ENCODE measurements at regions of chr14 and their contacts with region 1.

Region 1: DNA sequence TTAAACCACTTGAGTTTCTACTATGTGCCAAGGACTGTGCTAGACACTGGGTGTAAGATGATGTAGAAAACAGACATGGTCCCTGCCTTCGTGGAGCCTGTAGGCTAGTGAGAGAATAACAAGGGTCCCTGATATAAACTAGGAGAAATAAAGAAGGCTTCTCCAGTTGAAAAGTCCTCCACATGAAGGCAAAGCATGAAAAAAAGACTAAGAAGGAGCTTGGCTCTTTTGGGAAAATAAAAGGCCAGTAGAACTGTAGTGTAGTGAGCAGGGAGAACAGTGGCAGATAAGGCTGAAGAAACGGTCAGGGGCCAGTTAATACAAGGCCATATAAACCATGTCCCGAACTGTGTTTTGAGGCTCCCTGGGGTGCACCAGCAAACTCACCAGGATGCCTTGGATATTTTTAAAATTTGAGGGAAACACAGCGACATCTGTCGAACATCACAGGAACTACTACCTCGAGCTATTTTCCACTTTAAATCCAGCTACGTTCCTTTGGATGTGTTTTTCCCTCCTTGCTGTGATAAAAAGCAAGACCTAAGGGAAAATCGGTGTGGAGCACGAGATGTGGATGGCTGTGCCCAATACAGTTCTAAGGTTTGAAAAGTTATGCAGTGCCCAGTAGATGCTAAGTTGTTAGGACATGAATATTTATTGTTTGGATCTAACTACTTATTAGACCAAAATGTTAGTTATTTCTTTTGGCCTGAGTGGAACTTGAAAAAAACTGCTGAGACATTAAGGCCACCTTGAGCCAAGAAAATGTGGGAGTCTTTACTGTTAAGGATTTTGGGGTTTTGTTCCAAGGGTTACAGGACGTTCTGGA is 8.5 kb upstream of the CFL2 start:
- DNase-seq: peak; percentile 24
- ATAC-seq: peak; percentile 53
- H3K4me3 Mint-ChIP-seq: no peak overlapping the region
- H3K27ac Mint-ChIP-seq: peak overlapping the region; percentile 85
- H3K4me1 Mint-ChIP-seq: peaks cover 7% of the 10 kb centered on the region
- H3K27me3 Mint-ChIP-seq: peaks cover 6% of the 10 kb centered on the region; the same call in 1 of the 2 replicates
- CTCF ChIP-seq: peak; percentile 74

Region 2: DNA sequence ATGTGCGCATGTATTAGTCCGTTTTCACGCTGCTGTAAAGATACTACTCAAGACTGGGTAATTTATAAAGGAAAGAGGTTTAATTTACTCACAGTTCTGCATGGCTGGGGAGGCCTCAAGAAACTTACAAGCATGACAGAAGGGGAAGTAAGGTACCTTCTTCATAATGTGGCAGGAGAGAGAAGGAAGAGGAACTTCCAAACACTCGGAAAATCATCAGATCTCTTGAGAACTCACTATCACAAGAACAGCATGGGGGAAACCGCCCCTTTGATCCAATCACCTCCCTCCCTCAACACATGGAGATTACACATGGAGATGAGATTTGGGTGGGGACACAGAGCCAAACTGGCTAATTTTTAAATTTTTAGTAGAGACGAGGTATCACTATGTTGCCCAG is 51.2 kb before region 1 on chr14:
- CTCF ChIA-PET with region 1: interaction called, 47 read pairs
- POLR2A ChIA-PET with region 1: no interaction called
- DNase-seq: no peak
- ATAC-seq: no peak
- H3K4me3 Mint-ChIP-seq: no peak overlapping the region
- H3K27ac Mint-ChIP-seq: no peak overlapping the region
- H3K4me1 Mint-ChIP-seq: peaks cover 5% of the 10 kb centered on the region
- H3K27me3 Mint-ChIP-seq: no peaks in the 10 kb centered on the region
- CTCF ChIP-seq: no peak

Region 3: GRCh38 chr14:34693228-34693939 is 29.5 kb before region 1 on chr14:
- CTCF ChIA-PET with region 1: interaction called, 18 read pairs
- POLR2A ChIA-PET with region 1: no interaction called
- DNase-seq: peak; percentile 76
- ATAC-seq: peak; percentile 94
- H3K4me3 Mint-ChIP-seq: peak overlapping the region; percentile 34
- H3K27ac Mint-ChIP-seq: peak overlapping the region; percentile 69; the same call in 1 of the 2 replicates
- H3K4me1 Mint-ChIP-seq: peaks cover 24% of the 10 kb centered on the region
- H3K27me3 Mint-ChIP-seq: no peaks in the 10 kb centered on the region; the same call in 1 of the 2 replicates
- CTCF ChIP-seq: no peak

Region 4: GRCh38 chr14:34733235-34733634 is 10.3 kb after region 1 on chr14:
- CTCF ChIA-PET with region 1: interaction called, 26 read pairs
- POLR2A ChIA-PET with region 1: no interaction called
- DNase-seq: no peak
- ATAC-seq: no peak
- H3K4me3 Mint-ChIP-seq: no peak overlapping the region
- H3K27ac Mint-ChIP-seq: no peak overlapping the region
- H3K4me1 Mint-ChIP-seq: no peaks in the 10 kb centered on the region
- H3K27me3 Mint-ChIP-seq: no peaks in the 10 kb centered on the region
- CTCF ChIP-seq: no peak

Region 5: DNA sequence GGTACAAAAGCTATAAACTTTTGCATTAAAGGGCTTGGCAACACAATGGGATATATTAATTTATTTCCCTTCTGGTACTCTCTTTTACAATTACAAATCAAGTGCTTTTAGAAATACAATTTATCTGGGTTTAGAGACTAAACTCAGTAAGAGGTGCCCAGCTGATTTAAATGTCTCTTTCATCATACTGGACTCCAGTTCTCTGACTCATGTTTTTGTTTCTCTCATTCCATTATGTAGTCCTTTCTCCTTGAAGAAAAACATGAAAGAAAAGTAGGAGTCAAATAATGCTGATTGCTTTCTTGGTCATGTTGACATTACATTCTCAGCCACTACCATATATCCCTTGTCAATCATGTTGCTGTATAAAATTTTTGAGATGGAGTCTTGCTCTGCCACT is 27.7 kb after region 1 on chr14:
- CTCF ChIA-PET with region 1: interaction called, 10 read pairs
- POLR2A ChIA-PET with region 1: no interaction called
- DNase-seq: no peak
- ATAC-seq: no peak
- H3K4me3 Mint-ChIP-seq: no peak overlapping the region
- H3K27ac Mint-ChIP-seq: no peak overlapping the region
- H3K4me1 Mint-ChIP-seq: no peaks in the 10 kb centered on the region
- H3K27me3 Mint-ChIP-seq: no peaks in the 10 kb centered on the region
- CTCF ChIP-seq: no peak

Region 6: DNA sequence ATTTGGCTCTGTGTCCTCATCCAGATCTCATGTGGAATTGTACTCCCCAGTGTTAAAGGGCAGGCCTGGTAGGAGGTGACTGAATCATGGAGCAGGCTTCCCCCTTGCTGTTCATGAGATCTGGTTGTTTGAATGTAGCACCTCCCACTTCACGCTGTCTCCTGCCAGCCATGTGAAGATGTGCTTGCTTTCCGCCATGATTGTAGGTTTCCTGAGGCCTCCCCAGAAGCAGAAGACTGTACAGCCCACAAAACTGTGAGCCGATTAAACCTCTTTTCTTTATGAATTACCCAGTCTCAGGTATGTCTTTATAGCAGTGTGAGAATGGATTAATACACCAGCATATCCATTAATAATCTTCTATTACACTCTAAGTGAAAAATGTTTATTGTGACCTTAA is 82.0 kb after region 1 on chr14:
- CTCF ChIA-PET with region 1: no interaction called
- POLR2A ChIA-PET with region 1: no interaction called
- DNase-seq: no peak
- ATAC-seq: no peak
- H3K4me3 Mint-ChIP-seq: no peak overlapping the region
- H3K27ac Mint-ChIP-seq: no peak overlapping the region
- H3K4me1 Mint-ChIP-seq: no peaks in the 10 kb centered on the region
- H3K27me3 Mint-ChIP-seq: no peaks in the 10 kb centered on the region
- CTCF ChIP-seq: no peak